GM12878 (cell line): ENCODE measurements at regions of chr2 and their contacts with region 1.

Region 1: DNA sequence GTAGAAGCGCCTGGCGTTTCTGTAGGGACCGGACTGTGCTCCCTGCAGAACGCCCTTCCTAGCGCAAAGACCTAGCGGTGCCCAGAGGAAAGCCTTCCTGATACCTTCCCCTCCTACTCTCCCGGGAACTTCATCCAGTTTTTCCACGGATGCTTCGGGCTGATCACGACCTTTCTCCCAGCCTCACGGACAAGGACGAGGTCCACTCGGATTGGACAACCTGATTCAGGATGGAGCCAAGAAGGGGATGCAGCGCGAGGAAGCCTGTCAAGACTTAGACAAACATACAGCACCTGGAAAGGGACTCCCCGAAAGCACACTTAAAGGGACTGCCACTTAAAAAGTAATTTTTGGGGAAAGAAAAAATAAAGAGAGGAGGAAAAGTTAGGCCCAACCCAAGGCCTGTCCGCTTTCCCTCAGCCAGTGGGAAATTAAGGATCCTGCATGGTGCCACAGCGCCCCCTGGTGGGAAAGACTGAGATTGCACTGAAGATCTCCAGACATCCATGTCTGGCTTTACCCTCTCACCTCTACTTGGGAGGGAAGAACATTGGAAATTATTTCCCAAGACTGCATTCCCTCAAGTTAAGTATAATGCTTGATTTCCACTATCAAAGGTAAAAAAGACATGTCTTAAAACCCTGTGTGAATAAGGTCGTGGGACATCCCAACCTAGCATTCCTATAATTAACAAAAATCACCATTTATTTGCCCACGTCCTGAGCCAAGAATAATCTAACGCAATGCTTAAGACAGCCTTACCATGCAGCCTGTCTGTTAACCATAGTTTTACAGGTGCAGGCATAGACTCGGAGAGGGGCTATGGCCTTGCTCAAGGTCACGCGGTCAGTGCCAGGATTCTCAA is 13.4 kb upstream of the COPS8 start:
- DNase-seq: no peak
- ATAC-seq: peak; percentile 81
- H3K4me3 ChIP-seq: no peak overlapping the region
- H3K27ac ChIP-seq: no peak overlapping the region
- H3K4me1 ChIP-seq: no peaks in the 10 kb centered on the region
- H3K27me3 ChIP-seq: no peaks in the 10 kb centered on the region
- CTCF ChIP-seq: peak; percentile 92 to 95 (median 94)
- EP300 ChIP-seq: no peak
- POLR2A ChIP-seq: no peak
- RAD21 ChIP-seq: peak; percentile 97

Region 2: DNA sequence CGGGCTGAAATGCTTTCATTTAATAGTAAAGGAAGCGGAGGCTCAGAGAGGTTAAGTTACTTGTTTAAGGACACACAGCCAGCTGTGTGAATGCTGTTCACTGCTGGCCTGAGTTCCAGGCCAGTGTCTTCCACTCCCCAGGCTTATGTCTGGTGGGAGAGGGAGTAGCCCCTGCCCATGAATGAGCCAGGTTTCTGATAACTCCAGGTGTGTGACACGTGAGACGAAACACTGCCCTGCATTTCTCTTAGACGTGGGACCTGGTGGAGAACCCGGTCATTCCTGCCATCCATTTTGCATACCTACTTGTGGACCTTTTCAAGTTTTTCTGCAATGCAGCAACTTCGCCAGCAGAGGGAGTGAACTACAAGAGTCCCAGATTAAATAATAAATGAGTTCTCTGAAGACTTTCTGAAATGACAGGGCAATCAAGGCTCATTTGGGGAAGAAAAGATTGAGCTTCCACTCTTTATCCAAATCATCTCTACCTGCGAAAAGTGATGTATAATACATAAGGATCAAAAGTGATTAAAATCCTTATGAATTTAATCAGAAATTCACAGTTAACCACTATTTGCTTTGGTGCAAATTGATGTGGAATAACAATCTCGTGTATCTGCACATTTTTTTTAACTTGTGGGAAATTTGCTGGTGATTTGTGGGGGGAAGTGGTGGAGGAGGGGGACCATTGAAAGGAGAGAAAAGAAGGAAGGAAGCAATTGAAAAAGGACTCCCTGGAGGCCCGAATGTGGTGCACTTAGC is 728.7 kb before region 1 on chr2:
- CTCF ChIA-PET with region 1: interaction called, 4 read pairs
- POLR2A ChIA-PET with region 1: no interaction called
- RAD21 ChIA-PET with region 1: interaction called, 3 read pairs
- SMC1A ChIA-PET with region 1: interaction called, 3 read pairs
- in situ Hi-C with region 1: loop called (anchors 5 kb)
- intact Hi-C with region 1: loop called (anchors 1 kb)
- DNase-seq: peak; percentile 9
- ATAC-seq: peak; percentile 68
- H3K4me3 ChIP-seq: no peak overlapping the region
- H3K27ac ChIP-seq: no peak overlapping the region
- H3K4me1 ChIP-seq: no peaks in the 10 kb centered on the region
- H3K27me3 ChIP-seq: peaks cover 0 to 4% of the 10 kb centered on the region in 2 experiments; a peak in 2 of 4 replicates
- CTCF ChIP-seq: peak; percentile 67 to 81 (median 73)
- EP300 ChIP-seq: no peak
- POLR2A ChIP-seq: no peak
- RAD21 ChIP-seq: peak; percentile 69

Region 3: DNA sequence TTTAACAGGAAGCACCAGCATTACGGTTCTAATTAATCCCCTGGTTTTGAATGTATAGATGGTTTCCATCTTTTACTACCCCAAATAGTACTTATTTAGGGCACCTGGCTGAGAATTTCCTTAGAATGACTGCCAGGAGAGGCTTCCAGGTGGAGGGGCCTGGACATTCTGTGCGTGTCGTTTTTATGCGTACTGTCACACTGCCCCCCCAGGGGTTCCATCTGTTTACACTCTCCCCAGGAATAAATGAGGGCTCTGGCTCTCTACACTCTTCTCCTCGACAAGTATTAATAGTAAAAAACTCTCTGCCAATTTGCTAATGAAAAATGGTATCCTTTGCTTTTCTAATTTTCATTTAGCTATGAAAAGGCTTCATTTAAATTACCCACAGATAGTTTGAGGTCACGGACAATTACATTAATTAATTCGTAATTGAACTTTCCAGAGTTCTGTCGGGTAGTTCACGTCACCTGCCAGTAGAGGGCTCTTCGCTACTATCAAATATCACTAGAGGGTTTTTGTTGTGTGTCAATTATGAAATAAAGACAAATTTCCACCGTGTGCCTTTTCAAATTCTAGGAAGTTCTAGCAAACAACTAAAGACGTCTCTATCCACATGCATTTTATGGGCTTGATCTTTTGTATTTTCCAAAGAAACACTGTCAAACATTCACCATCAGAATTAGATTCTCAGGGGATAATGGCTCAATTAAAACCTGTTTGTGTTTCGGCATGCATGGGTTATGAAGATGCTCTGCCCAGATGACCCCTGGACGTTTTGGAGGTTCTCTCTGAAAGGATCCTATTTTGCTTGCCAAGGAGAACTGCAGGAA is 719.3 kb before region 1 on chr2:
- CTCF ChIA-PET with region 1: interaction called, 11 read pairs
- POLR2A ChIA-PET with region 1: no interaction called
- RAD21 ChIA-PET with region 1: no interaction called
- SMC1A ChIA-PET with region 1: no interaction called
- in situ Hi-C with region 1: loop called (anchors 5 kb)
- intact Hi-C with region 1: loop called (anchors 2 kb)
- DNase-seq: no peak
- ATAC-seq: peak; percentile 58
- H3K4me3 ChIP-seq: no peak overlapping the region
- H3K27ac ChIP-seq: no peak overlapping the region
- H3K4me1 ChIP-seq: no peaks in the 10 kb centered on the region
- H3K27me3 ChIP-seq: no peaks in the 10 kb centered on the region
- CTCF ChIP-seq: peak; percentile 63 to 80 (median 75); a peak in 5 of 6 replicates
- EP300 ChIP-seq: no peak
- POLR2A ChIP-seq: no peak
- RAD21 ChIP-seq: peak; percentile 84

Region 4: GRCh38 chr2:236998236-236998635 is 74.1 kb before region 1 on chr2:
- CTCF ChIA-PET with region 1: no interaction called
- POLR2A ChIA-PET with region 1: no interaction called
- RAD21 ChIA-PET with region 1: no interaction called
- SMC1A ChIA-PET with region 1: no interaction called
- in situ Hi-C with region 1: no loop called
- intact Hi-C with region 1: no loop called
- DNase-seq: no peak
- ATAC-seq: no peak
- H3K4me3 ChIP-seq: no peak overlapping the region
- H3K27ac ChIP-seq: no peak overlapping the region
- H3K4me1 ChIP-seq: no peaks in the 10 kb centered on the region
- H3K27me3 ChIP-seq: peaks cover 0 to 5% of the 10 kb centered on the region in 2 experiments; a peak in 2 of 4 replicates
- CTCF ChIP-seq: no peak
- EP300 ChIP-seq: no peak
- POLR2A ChIP-seq: no peak
- RAD21 ChIP-seq: no peak

Region 5: GRCh38 chr2:237085248-237086221 is 13.2 kb after region 1 on chr2 and contains the start of gene COPS8:
- CTCF ChIA-PET with region 1: interaction called, 20 read pairs
- POLR2A ChIA-PET with region 1: interaction called, 3 read pairs
- RAD21 ChIA-PET with region 1: interaction called, 3 read pairs
- SMC1A ChIA-PET with region 1: interaction called, 16 read pairs
- in situ Hi-C with region 1: no loop called
- intact Hi-C with region 1: no loop called
- DNase-seq: peak; percentile 55
- ATAC-seq: peak; percentile 100
- H3K4me3 ChIP-seq: peak within 1 kb of the TSS; percentile 81
- H3K27ac ChIP-seq: peak within 1 kb of the TSS; percentile 69
- H3K4me1 ChIP-seq: peaks cover 3% of the 10 kb centered on the region
- H3K27me3 ChIP-seq: no peaks in the 10 kb centered on the region
- CTCF ChIP-seq: peak; percentile 5 to 41 (median 27); a peak in 3 of 6 replicates
- EP300 ChIP-seq: 0 out of 4 replicates have a peak, but pooled peaks of 1 of the 2 experiments have one; percentile 12
- POLR2A ChIP-seq: peak; percentile 95
- RAD21 ChIP-seq: no peak
- polyA plus RNA-seq, gene COPS8: 106 to 133 TPM